HCT116 (cell line): ENCODE measurements at regions of chr9 and their contacts with region 1.

Region 1: GRCh38 chr9:69605406-69605805 is 66.8 kb downstream of the APBA1 start:
- DNase-seq: no peak
- ATAC-seq: no peak
- H3K4me3 ChIP-seq: no peak overlapping the region
- H3K27ac ChIP-seq: no peak overlapping the region
- H3K4me1 ChIP-seq: no peaks in the 10 kb centered on the region
- H3K27me3 ChIP-seq: no peaks in the 10 kb centered on the region
- CTCF ChIP-seq: no peak
- POLR2A ChIP-seq: no peak
- RAD21 ChIP-seq: no peak

Region 2: DNA sequence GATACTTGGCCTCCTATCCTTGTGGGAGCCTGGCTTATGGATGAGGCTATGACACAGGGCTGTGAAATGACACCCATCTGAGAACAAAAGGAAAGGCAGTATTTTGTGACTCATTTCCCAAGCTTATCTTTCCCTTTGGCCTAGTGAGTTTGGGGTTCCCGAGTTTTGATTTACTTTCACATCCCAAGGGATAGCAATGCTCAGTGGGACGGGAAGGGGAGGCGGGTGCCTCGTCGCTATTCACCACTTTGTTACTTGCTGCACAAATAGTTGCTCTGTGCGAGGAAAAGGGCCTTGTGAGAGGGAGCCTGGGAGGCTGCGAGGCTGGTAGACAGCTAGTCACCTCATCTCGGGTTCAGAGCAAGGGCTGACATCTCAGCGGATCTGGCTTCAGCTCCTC is 339.5 kb before region 1 on chr9:
- CTCF ChIA-PET with region 1: no interaction called
- POLR2A ChIA-PET with region 1: no interaction called
- RAD21 ChIA-PET with region 1: no interaction called
- intact Hi-C with region 1: no loop called
- DNase-seq: no peak
- ATAC-seq: no peak
- H3K4me3 ChIP-seq: no peak overlapping the region
- H3K27ac ChIP-seq: no peak overlapping the region
- H3K4me1 ChIP-seq: peaks cover 0 to 4% of the 10 kb centered on the region in 2 experiments; a peak in 1 of 4 replicates
- H3K27me3 ChIP-seq: no peaks in the 10 kb centered on the region
- CTCF ChIP-seq: no peak
- POLR2A ChIP-seq: no peak
- RAD21 ChIP-seq: no peak

Region 3: DNA sequence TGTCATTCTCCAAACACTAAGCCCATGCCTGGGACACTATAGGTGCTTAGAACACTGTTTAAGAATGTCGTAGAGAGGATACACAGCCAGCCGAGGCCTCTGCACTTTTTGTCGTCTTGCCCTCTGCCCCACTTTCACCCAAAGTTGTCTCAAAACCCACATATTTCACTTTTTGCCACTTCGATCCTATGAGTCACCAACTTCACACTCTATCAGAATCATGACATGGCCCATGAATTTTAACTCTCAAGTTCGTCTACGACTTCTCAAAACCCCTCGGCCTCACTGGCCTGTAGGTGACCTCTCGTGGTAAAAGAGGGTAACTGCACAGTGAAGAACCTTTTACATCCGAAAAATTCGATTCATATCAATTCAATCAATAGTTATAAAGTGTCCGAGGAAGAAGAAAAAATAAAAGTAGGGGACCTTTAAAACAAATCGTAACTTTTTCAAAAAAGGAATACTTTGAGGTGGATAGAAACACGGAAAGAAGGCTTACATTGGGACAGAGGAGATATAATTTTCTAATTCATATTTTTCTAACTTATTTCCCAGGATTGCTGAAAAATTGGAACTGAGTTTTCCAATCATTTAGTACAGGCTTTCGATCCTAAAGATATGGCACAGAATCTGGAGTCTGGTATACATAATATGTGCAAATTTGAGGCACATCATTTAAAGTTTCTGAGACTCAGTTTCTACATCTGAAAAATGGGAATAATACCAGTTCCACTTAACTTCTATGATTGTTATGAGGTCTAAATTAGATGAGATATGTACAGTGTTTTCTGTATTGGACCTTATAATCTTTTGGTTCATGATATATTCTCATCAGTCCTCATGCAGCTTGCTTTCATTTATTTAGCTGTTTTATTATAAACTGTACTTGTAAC is 55.9 kb before region 1 on chr9:
- CTCF ChIA-PET with region 1: no interaction called
- POLR2A ChIA-PET with region 1: no interaction called
- RAD21 ChIA-PET with region 1: no interaction called
- intact Hi-C with region 1: loop called (anchors 10 kb)
- DNase-seq: peak; percentile 38
- ATAC-seq: peak; percentile 58
- H3K4me3 ChIP-seq: no peak overlapping the region
- H3K27ac ChIP-seq: no peak overlapping the region
- H3K4me1 ChIP-seq: no peaks in the 10 kb centered on the region
- H3K27me3 ChIP-seq: peaks cover 37% of the 10 kb centered on the region; the same call in 1 of the 2 replicates
- CTCF ChIP-seq: peak; percentile 67 to 89 (median 83); a peak in 5 of 6 replicates
- POLR2A ChIP-seq: no peak
- RAD21 ChIP-seq: peak; percentile 76